Activated B cell treated with CpG ODN at 0.5 μM for 24 hours (primary cell): ENCODE measurements at regions of chr17 and their contacts with region 1.

Region 1: GRCh38 chr17:73371285-73371684 is 59.5 kb upstream of the CDC42EP4 start:
- DNase-seq: no peak
- ATAC-seq: no peak
- H3K4me3 Mint-ChIP-seq: no peak overlapping the region
- H3K27ac Mint-ChIP-seq: no peak overlapping the region
- H3K4me1 Mint-ChIP-seq: peaks cover 2% of the 10 kb centered on the region
- H3K27me3 Mint-ChIP-seq: no peaks in the 10 kb centered on the region
- CTCF ChIP-seq: no peak

Region 2: DNA sequence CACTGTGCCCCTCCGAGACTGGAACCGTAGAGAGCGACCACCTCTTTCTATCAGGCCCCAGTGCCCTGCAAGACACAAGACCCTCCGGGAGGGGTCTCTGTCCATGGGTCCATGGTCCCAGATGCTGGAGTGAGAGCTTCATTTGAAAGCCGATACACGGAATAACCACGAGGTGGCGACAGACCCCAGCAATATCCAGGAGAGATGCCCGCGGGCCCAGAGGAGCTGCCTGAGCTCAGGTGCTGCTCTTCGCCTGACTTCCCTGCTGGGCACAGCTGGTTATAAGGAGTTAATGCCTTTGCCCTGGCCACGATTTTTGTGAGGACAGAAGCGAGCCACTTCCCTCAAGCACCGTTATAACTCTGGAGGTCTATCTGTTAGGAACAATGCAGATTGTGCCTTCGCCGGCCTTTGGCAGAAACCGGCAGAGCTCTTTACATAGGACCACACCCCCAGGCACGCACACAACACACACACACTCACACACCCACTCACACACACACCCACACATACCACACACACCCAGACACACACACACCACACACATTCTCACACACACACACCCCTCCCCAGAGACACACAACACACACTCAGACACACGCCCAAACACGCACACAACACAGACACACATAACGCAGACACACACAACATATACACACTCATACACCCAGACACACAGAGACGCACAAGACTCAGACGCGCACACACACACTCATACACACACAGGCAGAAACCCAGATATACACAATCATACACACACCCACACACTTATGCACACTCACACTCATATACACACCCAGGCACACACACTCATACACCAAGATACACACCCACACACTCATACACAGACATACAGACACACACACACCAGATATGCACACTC is 814.1 kb before region 1 on chr17:
- CTCF ChIA-PET with region 1: interaction called, 16 read pairs
- POLR2A ChIA-PET with region 1: no interaction called
- intact Hi-C with region 1: loop called (anchors 1 kb)
- DNase-seq: peak; percentile 23
- ATAC-seq: peak; percentile 40
- H3K4me3 Mint-ChIP-seq: no peak overlapping the region
- H3K27ac Mint-ChIP-seq: no peak overlapping the region
- H3K4me1 Mint-ChIP-seq: no peaks in the 10 kb centered on the region
- H3K27me3 Mint-ChIP-seq: no peaks in the 10 kb centered on the region
- CTCF ChIP-seq: peak; percentile 34

Region 3: DNA sequence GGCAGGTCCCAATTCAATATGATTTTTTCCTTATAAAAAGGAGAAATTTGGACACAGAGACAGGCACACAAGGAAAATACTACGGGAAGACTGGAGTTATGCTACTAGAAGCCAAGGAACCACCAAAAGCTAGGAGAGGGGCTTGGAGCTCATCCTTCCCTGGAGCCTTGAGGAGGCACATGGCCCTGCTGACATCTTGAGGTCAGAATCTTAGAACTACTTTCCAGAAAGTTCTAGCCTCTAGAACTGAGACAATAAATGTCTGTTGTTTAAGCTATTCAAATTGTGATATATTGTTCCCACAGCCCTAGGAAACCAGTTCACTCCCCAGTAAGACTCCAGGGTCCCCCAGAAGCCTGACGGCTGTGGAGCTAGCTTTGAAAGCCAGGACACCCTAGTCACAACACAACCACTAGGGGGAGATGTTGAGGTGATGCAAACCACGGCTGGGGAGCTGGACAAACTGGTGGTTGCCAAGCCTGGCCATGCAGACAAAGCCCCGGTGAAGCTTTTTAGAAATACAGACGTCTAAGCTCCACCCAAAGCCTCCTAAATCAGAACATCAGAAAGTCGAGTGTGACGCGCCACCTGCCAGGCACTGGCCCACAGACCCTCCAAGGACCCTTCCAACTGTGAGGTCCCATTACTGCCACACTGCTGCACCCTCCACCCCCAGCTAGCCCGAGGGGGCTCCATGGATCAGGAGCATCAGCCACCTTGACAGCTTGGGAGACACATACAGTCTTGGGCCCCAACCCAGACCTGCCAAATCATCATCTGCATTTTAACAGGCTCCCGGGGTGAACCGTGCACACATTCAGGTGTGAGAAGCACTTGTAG is 385.2 kb before region 1 on chr17:
- CTCF ChIA-PET with region 1: interaction called, 8 read pairs
- POLR2A ChIA-PET with region 1: no interaction called
- intact Hi-C with region 1: loop called (anchors 2 kb)
- DNase-seq: no peak
- ATAC-seq: peak; percentile 52
- H3K4me3 Mint-ChIP-seq: no peak overlapping the region
- H3K27ac Mint-ChIP-seq: no peak overlapping the region
- H3K4me1 Mint-ChIP-seq: no peaks in the 10 kb centered on the region
- H3K27me3 Mint-ChIP-seq: no peaks in the 10 kb centered on the region
- CTCF ChIP-seq: peak; percentile 55

Region 4: DNA sequence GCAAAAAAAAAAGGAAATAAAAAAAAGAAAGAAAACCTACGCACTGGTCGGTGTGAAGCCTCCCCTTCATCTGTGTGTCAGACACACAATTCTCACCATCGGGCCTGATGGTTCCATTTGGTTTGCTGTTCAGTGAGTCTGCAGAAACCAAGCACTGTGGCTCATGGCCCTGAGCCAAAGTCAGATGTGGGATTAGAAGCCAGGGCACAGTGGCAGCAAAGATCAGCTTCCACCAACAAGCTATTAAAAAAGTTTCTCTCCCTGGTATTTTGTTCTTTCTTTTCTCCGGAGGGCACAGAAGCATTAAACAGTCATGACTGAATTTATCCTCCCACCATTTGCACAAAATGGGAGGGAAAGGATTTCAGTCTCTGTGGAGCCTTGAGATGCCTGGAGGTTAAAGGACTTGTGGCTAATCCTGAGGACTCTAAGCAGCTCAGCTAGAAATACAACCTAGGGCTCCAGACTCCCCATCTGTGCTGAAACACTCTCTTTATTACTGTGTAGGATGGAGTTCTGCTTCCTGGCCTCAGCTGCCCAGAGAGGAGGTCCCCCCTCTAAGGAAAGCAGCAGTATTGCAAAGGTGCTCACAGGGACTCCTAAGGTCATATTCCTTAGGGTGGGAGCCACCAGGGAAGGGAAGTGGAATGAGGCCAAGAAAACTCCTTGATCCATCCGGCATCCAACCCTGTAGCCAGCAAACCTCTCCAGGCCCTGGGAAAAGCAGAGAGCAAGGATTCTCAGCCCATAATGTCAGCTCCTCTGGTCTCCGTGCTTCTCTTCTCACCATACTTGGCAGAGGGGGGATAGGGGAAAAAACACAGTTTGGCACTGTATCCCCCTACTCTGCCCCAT is 307.0 kb before region 1 on chr17:
- CTCF ChIA-PET with region 1: no interaction called
- POLR2A ChIA-PET with region 1: no interaction called
- intact Hi-C with region 1: no loop called
- DNase-seq: no peak
- ATAC-seq: no peak
- H3K4me3 Mint-ChIP-seq: no peak overlapping the region
- H3K27ac Mint-ChIP-seq: no peak overlapping the region
- H3K4me1 Mint-ChIP-seq: no peaks in the 10 kb centered on the region
- H3K27me3 Mint-ChIP-seq: no peaks in the 10 kb centered on the region
- CTCF ChIP-seq: no peak

Region 5: GRCh38 chr17:73311781-73312641 is 59.3 kb before region 1 on chr17 and contains the start of gene CDC42EP4:
- CTCF ChIA-PET with region 1: interaction called, 8 read pairs
- POLR2A ChIA-PET with region 1: interaction called, 7 read pairs
- intact Hi-C with region 1: loop called (anchors 2 kb)
- DNase-seq: peak; percentile 76
- ATAC-seq: peak; percentile 91
- H3K4me3 Mint-ChIP-seq: peak within 1 kb of the TSS; percentile 84
- H3K27ac Mint-ChIP-seq: no peak within 1 kb of the TSS
- H3K4me1 Mint-ChIP-seq: peaks cover 19% of the 10 kb centered on the region
- H3K27me3 Mint-ChIP-seq: no peaks in the 10 kb centered on the region
- CTCF ChIP-seq: no peak
- total RNA-seq, gene CDC42EP4: 0.61 and 0.95 TPM in 2 replicates